ENCODE measurements at regions of chr2 and their contacts with region 1.

Region 1: GRCh38 chr2:71130113-71130904 is at the starts of genes MCEE and MPHOSPH10:
- DNase-seq: peak; percentile 88

Region 2: DNA sequence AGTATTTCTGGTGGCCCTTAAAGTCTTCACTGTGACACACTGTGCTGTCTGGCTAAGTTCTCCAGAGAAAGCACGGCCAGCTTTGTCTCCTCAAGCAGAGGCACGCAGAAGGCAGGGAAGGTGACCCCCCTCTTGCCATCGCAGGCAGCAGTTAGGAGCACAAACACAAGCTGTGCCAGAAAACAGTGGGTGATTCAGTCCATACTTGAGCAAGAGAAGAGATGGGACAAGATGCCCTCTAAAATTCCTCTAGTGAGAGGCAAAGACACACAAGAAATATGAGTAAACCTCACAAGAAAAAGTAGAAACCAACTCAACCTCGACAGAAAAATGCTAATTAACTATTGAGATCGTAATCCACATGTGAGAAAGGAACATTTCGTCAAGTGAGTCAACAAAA is 10.1 kb before region 1 on chr2:
- CTCF ChIA-PET with region 1: no interaction called
- POLR2A ChIA-PET with region 1: no interaction called
- DNase-seq: no peak

Region 3: GRCh38 chr2:71143782-71144181 is 13.5 kb after region 1 on chr2:
- CTCF ChIA-PET with region 1: no interaction called
- POLR2A ChIA-PET with region 1: interaction called, 10 read pairs
- DNase-seq: no peak

Measured in HEK293T (cell line).